HepG2 (cell line): ENCODE measurements at regions of chr10 and their contacts with region 1.

Region 1: GRCh38 chr10:16545116-16545736 is 23.5 kb upstream of the C1QL3 start:
- DNase-seq: peak; percentile 13
- ATAC-seq: peak; percentile 57
- H3K4me3 ChIP-seq: no peak overlapping the region
- H3K27ac ChIP-seq: no peak overlapping the region
- H3K4me1 ChIP-seq: no peaks in the 10 kb centered on the region
- H3K27me3 ChIP-seq: peaks cover 0 to 4% of the 10 kb centered on the region in 2 experiments; a peak in 1 of 5 replicates
- CTCF ChIP-seq: peak; percentile 66
- EP300 ChIP-seq: no peak
- POLR2A ChIP-seq: no peak
- RAD21 ChIP-seq: no peak

Region 2: GRCh38 chr10:16314259-16314658 is 231.0 kb before region 1 on chr10:
- CTCF ChIA-PET with region 1: interaction called, 5 read pairs
- POLR2A ChIA-PET with region 1: no interaction called
- in situ Hi-C with region 1: no loop called
- intact Hi-C with region 1: loop called (anchors 2 kb)
- DNase-seq: peak; percentile 20
- ATAC-seq: peak; percentile 81
- H3K4me3 ChIP-seq: no peak overlapping the region
- H3K27ac ChIP-seq: no peak overlapping the region
- H3K4me1 ChIP-seq: no peaks in the 10 kb centered on the region
- H3K27me3 ChIP-seq: no peaks in the 10 kb centered on the region
- CTCF ChIP-seq: peak; percentile 65
- EP300 ChIP-seq: no peak
- POLR2A ChIP-seq: no peak
- RAD21 ChIP-seq: peak; percentile 26; the same call in 1 of the 2 replicates

Region 3: DNA sequence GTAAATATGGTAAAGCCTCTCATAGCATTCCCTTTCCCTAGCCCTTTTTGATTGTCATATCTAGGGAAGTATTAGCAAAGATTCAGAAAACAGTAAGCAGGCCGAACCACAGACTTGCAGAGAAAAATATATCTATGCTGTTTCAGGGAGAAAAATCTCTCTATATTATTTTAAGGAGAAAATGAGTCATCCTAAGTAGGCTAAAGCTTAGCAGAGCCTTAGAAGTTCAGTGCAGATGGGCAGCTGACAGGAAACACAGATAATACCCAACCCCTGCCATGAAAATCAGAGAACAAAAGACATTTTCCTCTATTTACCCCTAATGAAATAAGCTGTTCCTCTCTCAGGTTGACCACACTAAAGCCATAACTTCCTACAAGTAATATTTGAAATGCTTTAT is 40.1 kb before region 1 on chr10:
- CTCF ChIA-PET with region 1: no interaction called
- POLR2A ChIA-PET with region 1: no interaction called
- in situ Hi-C with region 1: no loop called
- intact Hi-C with region 1: no loop called
- DNase-seq: no peak
- ATAC-seq: no peak
- H3K4me3 ChIP-seq: no peak overlapping the region
- H3K27ac ChIP-seq: no peak overlapping the region
- H3K4me1 ChIP-seq: no peaks in the 10 kb centered on the region
- H3K27me3 ChIP-seq: no peaks in the 10 kb centered on the region
- CTCF ChIP-seq: no peak
- EP300 ChIP-seq: no peak
- POLR2A ChIP-seq: no peak
- RAD21 ChIP-seq: no peak